T-cell (primary cell): ENCODE measurements at regions of chr2 and their contacts with region 1.

Region 1: DNA sequence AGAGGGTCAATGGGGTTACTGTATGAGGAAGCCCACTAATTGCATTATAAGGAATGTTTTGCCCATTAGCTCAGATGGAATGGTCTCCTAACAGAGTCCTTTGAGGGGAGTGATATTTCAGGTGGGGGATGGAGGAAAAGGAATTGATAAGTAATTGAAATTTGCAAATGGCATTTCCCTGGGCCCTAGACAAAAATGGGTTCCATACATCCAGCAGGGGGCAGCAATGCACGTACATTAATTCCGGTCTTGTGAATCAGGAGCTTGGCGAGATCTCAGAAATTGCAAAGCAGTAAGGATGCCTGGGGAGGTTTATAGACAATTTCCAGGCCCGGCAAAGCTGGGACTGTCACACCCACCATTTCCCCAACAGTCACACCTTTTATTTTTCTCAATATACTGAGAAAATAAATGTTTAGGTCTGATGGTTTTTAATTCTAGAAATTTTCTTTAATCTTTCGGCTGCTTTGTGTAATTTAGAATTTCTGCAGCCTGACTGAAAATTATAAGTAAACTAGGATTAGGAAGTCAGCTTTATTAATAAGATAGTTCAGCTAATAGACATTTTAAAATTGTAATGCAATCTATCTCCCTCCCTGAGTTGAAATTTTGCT is 122.8 kb downstream of the LYPD1 start:
- DNase-seq: peak in 12 of 35 experiments; percentile 1 to 37 (median 4)
- ATAC-seq: no peak
- H3K4me3 ChIP-seq: no peak overlapping the region
- H3K4me3 Mint-ChIP-seq: no peak overlapping the region
- H3K27ac ChIP-seq: no peak overlapping the region
- H3K27ac Mint-ChIP-seq: no peak overlapping the region
- H3K4me1 ChIP-seq: no peaks in the 10 kb centered on the region
- H3K4me1 Mint-ChIP-seq: no peaks in the 10 kb centered on the region
- H3K27me3 ChIP-seq: peaks cover 0 to 2% of the 10 kb centered on the region in 2 experiments
- H3K27me3 Mint-ChIP-seq: no peaks in the 10 kb centered on the region

Region 2: DNA sequence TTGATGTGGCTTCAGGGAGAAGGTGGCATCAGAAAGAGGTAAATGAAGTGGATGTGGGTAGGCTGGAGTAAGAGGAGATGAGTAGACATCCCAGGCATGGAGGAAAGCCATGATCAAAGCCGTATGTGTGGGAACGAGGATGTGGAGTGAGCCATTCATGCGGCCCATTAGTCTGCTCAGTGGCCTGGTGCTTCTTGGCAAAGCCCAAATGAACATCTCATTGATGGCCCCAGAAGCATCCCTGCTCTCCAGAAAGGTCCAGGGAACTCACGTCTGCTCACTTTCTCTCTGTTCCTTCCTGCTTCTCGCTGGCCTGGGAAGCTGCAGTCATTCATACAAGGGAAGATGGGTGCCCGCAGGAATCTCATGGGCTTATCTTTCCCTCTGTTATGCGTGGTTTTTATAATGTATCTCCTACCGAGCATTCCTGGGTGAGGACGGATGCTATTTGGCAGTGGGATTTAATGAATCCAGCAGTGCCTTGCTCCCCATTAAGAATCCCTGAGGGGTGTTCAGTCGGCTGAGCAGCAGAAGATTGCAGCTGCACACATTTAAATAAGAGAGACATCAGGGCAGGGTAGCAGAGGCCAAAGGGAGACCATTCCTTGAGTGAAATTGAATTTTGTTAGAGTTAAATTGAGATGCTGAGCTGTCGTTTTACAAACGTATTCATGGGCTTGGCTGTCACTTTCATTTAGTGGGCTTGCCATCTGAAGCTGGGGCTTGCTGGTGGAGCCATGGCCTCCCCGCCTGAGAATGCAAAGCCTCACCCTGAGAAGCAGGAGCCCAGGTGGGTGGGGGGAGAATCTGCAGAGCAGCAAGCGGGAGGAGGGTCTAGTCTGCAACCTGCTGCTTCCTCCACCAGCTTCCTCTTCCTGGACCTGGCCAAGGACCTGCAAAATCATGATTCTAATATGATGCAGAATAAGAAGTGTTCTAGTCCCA is 58.3 kb after region 1 on chr2:
- CTCF ChIA-PET with region 1: no interaction called
- POLR2A ChIA-PET with region 1: no interaction called
- DNase-seq: no peak
- ATAC-seq: no peak
- H3K4me3 ChIP-seq: no peak overlapping the region
- H3K4me3 Mint-ChIP-seq: no peak overlapping the region
- H3K27ac ChIP-seq: no peak overlapping the region
- H3K27ac Mint-ChIP-seq: no peak overlapping the region
- H3K4me1 ChIP-seq: no peaks in the 10 kb centered on the region
- H3K4me1 Mint-ChIP-seq: no peaks in the 10 kb centered on the region
- H3K27me3 ChIP-seq: no peaks in the 10 kb centered on the region
- H3K27me3 Mint-ChIP-seq: peaks cover 0 to 5% of the 10 kb centered on the region in 2 donors

Region 3: DNA sequence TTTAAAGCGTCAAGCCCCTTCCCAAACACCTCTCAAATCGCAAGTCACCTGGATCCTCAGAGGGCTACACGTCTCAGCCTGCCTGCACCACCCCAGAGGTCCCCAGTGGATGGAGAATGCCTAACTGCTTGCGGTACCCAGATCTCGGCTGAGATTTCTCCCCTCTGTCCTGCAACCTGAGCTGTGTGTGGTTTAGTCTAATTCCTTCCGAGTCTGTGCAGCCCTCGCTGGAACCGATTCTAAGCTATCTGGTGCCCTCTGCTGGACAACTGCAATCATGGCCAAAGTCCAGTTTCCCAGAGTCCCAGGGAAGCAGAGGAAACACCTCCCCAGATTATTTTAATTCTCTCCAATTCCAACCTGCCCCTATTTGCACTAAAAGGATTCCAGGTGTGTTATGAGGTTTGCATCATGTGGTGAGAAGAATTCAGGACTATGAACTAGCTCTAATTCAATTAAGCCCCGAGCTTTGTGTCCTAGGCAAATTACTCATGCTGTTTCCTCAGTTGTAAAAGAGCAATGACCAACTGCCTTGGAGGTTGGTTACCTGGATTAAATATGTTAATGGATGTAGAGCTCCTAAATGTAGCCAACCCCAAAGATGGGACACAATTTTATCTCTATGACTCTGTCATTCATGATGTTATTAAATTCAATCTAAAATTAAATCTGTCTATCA is 1297.2 kb after region 1 on chr2:
- CTCF ChIA-PET with region 1: interaction called in 1 of 2 experiments, 11 read pairs
- POLR2A ChIA-PET with region 1: no interaction called
- DNase-seq: peak in 32 of 35 experiments; percentile 2 to 70 (median 33)
- ATAC-seq: peak in 3 of 4 experiments; percentile 52 to 61 (median 53)
- H3K4me3 ChIP-seq: no peak overlapping the region
- H3K4me3 Mint-ChIP-seq: no peak overlapping the region
- H3K27ac ChIP-seq: no peak overlapping the region
- H3K27ac Mint-ChIP-seq: no peak overlapping the region
- H3K4me1 ChIP-seq: peaks cover 0 to 3% of the 10 kb centered on the region in 2 experiments
- H3K4me1 Mint-ChIP-seq: peaks cover 4 to 5% (median 5%) of the 10 kb centered on the region in 3 donors
- H3K27me3 ChIP-seq: peaks cover 0 to 10% of the 10 kb centered on the region in 2 experiments
- H3K27me3 Mint-ChIP-seq: peaks cover 14 to 15% of the 10 kb centered on the region in 2 donors